Right ventricle myocardium inferior (tissue), 1 donor: ENCODE measurements at regions of chr18 and their contacts with region 1.

Region 1: GRCh38 chr18:47772374-47773248 is 157.8 kb downstream of the SMAD2 start:
- DNase-seq: no peak
- ATAC-seq: peak; percentile 50

Region 2: GRCh38 chr18:48022531-48023329 is 250.1 kb after region 1 on chr18:
- intact Hi-C with region 1: loop called (anchors 2 kb)
- DNase-seq: no peak
- ATAC-seq: peak; percentile 39